GM12878 (cell line): ENCODE measurements at regions of chr5 and their contacts with region 1.

Region 1: GRCh38 chr5:139863855-139864558 is 68.4 kb downstream of the PSD2 start:
- DNase-seq: no peak
- ATAC-seq: peak; percentile 91
- H3K4me3 ChIP-seq: no peak overlapping the region
- H3K27ac ChIP-seq: no peak overlapping the region
- H3K4me1 ChIP-seq: peaks cover 8% of the 10 kb centered on the region
- H3K27me3 ChIP-seq: no peaks in the 10 kb centered on the region
- CTCF ChIP-seq: peak; percentile 76 to 85 (median 81)
- EP300 ChIP-seq: no peak
- POLR2A ChIP-seq: no peak
- RAD21 ChIP-seq: peak; percentile 74

Region 2: DNA sequence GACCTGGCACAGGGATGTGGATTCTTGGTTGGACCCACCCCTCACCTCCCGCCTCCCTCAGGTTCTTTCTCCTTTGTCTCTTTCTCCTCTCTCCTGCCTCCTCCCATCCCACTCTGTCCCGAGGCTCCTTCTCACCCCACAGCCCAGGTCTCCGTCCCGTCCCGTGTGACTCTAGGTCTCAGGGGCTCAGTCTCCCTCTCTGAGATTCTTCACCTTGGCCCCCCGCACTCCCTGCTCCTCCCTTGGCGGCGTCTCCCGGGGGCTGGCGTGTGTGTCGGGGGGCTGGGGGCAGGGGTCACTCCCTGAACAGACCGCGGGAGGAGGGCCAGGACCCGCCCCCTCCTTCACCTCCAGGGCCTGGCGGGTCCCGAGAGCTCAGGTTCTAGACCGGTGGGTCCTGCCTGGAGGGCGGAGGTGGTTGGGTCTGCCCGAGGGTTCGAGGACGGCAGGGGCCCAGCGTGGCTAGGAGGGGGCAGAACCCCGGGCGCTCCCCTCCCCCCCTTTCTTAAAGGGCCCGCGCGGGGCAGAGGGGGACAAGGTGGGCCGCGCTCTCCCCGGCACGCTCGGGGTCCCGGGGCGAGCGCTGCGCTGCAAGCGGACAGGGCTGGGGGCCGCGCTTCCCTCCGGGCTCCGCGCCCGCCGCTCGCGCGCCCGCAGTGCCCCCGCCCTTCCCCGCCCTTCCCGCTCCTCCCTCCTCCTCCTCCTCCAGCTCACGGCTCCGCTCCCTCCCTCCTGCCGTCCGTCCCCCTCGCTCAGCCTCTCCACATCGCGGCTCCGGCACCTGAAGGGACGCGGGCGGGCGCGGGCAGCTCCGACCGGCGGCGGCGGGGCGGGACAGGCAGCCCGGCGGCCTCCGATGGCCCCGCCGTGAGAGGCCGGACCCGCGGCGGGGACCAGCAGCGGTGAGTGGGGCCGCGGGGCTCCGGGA is 68.7 kb before region 1 on chr5 and contains the start of gene PSD2:
- CTCF ChIA-PET with region 1: interaction called, 61 read pairs
- POLR2A ChIA-PET with region 1: no interaction called
- RAD21 ChIA-PET with region 1: no interaction called
- SMC1A ChIA-PET with region 1: no interaction called
- in situ Hi-C with region 1: no loop called
- intact Hi-C with region 1: no loop called
- DNase-seq: no peak
- ATAC-seq: no peak
- H3K4me3 ChIP-seq: no peak within 1 kb of the TSS
- H3K27ac ChIP-seq: no peak within 1 kb of the TSS
- H3K4me1 ChIP-seq: no peaks in the 10 kb centered on the region
- H3K27me3 ChIP-seq: peaks cover 18 to 19% of the 10 kb centered on the region in 2 experiments
- CTCF ChIP-seq: no peak
- EP300 ChIP-seq: no peak
- POLR2A ChIP-seq: no peak
- RAD21 ChIP-seq: no peak
- polyA plus RNA-seq, gene PSD2: 0.02 TPM in 1 of 2 experiments, not detected in the other

Region 3: DNA sequence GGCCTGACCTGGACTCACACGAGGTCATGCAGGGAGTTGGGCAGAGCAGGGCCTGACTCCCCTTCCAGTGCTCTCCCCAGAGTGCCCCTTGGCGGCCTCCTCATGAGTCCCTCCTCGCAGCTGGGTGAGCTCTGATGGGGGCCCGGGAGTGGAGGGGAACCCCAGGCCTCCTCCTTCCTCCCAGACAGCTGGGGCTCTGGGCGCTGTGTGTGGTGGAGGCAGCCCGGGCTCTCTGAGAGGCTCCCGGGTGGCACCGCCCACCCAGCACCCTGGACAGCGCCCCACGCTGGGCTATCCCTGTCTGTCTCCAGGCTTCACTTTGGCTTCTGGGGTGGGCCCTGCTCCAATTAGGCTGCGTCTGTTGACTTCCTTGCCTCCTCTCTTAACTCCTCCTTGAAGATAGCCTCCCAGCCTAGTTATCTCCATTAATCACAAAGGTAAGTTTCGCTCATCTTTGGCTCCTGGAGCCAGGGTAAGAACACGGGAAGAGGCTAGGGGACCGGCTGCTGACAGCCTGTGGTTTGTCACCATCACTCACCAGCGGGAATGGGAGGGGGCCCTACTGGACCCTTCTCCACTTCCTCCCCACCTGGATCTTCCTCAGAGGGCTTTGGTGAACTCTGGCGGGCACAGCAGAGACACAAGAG is 55.4 kb before region 1 on chr5:
- CTCF ChIA-PET with region 1: no interaction called
- POLR2A ChIA-PET with region 1: no interaction called
- RAD21 ChIA-PET with region 1: no interaction called
- SMC1A ChIA-PET with region 1: no interaction called
- in situ Hi-C with region 1: no loop called
- intact Hi-C with region 1: no loop called
- DNase-seq: no peak
- ATAC-seq: peak; percentile 95
- H3K4me3 ChIP-seq: no peak overlapping the region
- H3K27ac ChIP-seq: no peak overlapping the region
- H3K4me1 ChIP-seq: no peaks in the 10 kb centered on the region
- H3K27me3 ChIP-seq: no peaks in the 10 kb centered on the region; a peak in 2 of 4 replicates
- CTCF ChIP-seq: no peak
- EP300 ChIP-seq: no peak
- POLR2A ChIP-seq: no peak
- RAD21 ChIP-seq: no peak

Region 4: DNA sequence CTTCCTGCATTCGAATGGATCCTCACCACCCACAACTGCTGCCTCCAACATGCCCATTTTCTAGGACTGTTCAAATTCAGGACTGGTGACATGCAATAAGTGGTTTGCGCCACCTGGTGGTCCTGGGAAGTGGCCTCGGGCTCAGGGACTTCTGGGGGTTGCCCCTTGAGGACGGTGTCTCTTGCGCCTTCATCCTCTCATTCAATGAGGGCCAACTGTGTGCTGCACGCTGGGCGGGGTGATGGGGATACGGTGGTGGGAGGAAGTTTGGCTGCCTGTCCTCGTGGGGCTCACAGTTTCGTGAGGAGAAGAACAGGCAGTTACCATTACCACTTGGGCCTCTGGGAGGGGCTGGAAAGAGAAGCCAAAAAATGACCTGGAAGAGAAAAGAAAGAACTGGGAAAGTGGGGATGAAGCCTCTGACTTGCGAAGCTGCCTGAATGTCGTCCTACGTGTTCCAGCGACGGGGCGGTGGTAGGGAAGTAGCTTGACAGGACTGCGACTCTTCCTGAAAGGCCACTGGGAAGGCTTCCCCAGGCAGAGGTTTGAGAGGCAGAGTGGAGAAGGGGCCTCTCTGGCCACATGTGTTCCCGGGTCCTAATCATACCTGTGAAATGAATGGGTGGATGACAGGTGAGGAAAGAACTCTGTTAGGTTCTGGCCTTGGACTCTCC is 19.4 kb before region 1 on chr5:
- CTCF ChIA-PET with region 1: interaction called, 28 read pairs
- POLR2A ChIA-PET with region 1: no interaction called
- RAD21 ChIA-PET with region 1: interaction called, 3 read pairs
- SMC1A ChIA-PET with region 1: interaction called, 10 read pairs
- in situ Hi-C with region 1: no loop called
- intact Hi-C with region 1: no loop called
- DNase-seq: peak; percentile 23
- ATAC-seq: peak; percentile 82
- H3K4me3 ChIP-seq: no peak overlapping the region
- H3K27ac ChIP-seq: no peak overlapping the region
- H3K4me1 ChIP-seq: peaks cover 12% of the 10 kb centered on the region
- H3K27me3 ChIP-seq: no peaks in the 10 kb centered on the region; a peak in 1 of 4 replicates
- CTCF ChIP-seq: peak; percentile 85 to 93 (median 89)
- EP300 ChIP-seq: no peak
- POLR2A ChIP-seq: no peak
- RAD21 ChIP-seq: peak; percentile 82

Region 5: GRCh38 chr5:140157032-140157803 is 293.2 kb after region 1 on chr5:
- CTCF ChIA-PET with region 1: no interaction called
- POLR2A ChIA-PET with region 1: no interaction called
- RAD21 ChIA-PET with region 1: no interaction called
- SMC1A ChIA-PET with region 1: no interaction called
- in situ Hi-C with region 1: no loop called
- intact Hi-C with region 1: loop called (anchors 5 kb)
- DNase-seq: peak; percentile 33
- ATAC-seq: peak; percentile 99
- H3K4me3 ChIP-seq: peak overlapping the region; percentile 41; the same call in 1 of the 2 replicates
- H3K27ac ChIP-seq: peak overlapping the region; percentile 24; the same call in 1 of the 2 replicates
- H3K4me1 ChIP-seq: peaks cover 4% of the 10 kb centered on the region
- H3K27me3 ChIP-seq: no peaks in the 10 kb centered on the region; a peak in 1 of 4 replicates
- CTCF ChIP-seq: peak; percentile 88 to 95 (median 94)
- EP300 ChIP-seq: no peak
- POLR2A ChIP-seq: no peak
- RAD21 ChIP-seq: peak; percentile 96